ENCODE measurements at regions of chr20 and their contacts with region 1.

Region 1: GRCh38 chr20:36421641-36422040 is 115.5 kb downstream of the DLGAP4 start:
- DNase-seq: no peak

Region 2: DNA sequence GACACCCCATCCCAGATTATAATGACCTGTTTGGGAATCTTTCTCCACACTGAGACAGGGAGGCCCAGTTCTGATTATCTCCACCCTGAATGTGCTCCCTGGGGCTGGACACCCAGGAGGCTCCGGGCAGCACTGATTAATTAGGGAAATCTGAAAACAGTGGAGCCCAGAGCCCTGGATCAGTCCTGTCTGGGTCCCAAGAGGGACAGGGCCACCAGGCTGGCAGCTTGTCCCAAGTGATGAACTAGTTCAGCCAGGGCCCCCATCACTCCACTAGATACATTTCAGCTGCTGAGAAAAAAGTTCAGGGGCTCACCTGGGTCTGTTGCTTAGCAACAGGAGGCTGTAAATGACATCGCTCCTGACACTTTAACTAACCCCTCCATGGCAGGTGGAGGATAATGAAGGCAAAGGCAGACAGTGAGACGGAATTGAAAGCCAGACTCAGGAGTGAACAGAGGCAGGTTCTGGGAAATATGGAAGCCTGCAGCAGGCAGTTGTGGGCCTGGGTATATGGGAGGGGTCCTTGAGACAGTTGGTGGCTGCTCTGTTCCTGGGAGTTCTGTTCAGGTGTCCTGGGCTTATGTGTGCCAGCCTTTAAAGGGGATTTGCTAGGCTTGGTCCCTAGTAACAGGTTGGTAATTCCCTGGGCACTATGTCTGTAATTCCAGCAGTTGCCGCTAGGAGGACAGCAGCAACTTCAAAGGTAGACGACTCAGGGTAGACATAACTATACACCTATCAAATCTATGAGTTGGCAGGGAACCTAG is 1193.9 kb after region 1 on chr20:
- intact Hi-C with region 1: loop called in 1 of 2 experiments (anchors 10 kb)
- DNase-seq: no peak

Measured in posterior vena cava (tissue), 2 donors.